CD8-positive, alpha-beta T cell (primary cell): ENCODE measurements at regions of chr6 and their contacts with region 1.

Region 1: GRCh38 chr6:26439657-26440056 is 647 bp upstream of the BTN3A3 start:
- DNase-seq: peak in 2 of 9 experiments; percentile 20 to 48
- ATAC-seq: no peak
- H3K4me3 ChIP-seq: peak overlapping the region; percentile 84 to 91
- H3K4me3 Mint-ChIP-seq: peak overlapping the region; percentile 100
- H3K27ac ChIP-seq: peak overlapping the region; percentile 95 to 98
- H3K27ac Mint-ChIP-seq: peak overlapping the region; percentile 100
- H3K4me1 ChIP-seq: peaks cover 23% of the 10 kb centered on the region
- H3K4me1 Mint-ChIP-seq: peaks cover 44% of the 10 kb centered on the region
- H3K27me3 ChIP-seq: no peaks in the 10 kb centered on the region
- H3K27me3 Mint-ChIP-seq: no peaks in the 10 kb centered on the region
- CTCF ChIP-seq: no peak

Region 2: GRCh38 chr6:26183581-26184366 is 255.9 kb before region 1 on chr6:
- CTCF ChIA-PET with region 1: no interaction called
- POLR2A ChIA-PET with region 1: no interaction called
- intact Hi-C with region 1: no loop called
- DNase-seq: peak in 7 of 9 experiments; percentile 33 to 90 (median 59)
- ATAC-seq: peak; percentile 88
- H3K4me3 ChIP-seq: peak overlapping the region; percentile 60 to 71
- H3K4me3 Mint-ChIP-seq: peak overlapping the region; percentile 100
- H3K27ac ChIP-seq: peak overlapping the region; percentile 61 to 76
- H3K27ac Mint-ChIP-seq: peak overlapping the region; percentile 99
- H3K4me1 ChIP-seq: peaks cover 20% of the 10 kb centered on the region
- H3K4me1 Mint-ChIP-seq: peaks cover 42% of the 10 kb centered on the region
- H3K27me3 ChIP-seq: no peaks in the 10 kb centered on the region
- H3K27me3 Mint-ChIP-seq: no peaks in the 10 kb centered on the region
- CTCF ChIP-seq: no peak

Region 3: DNA sequence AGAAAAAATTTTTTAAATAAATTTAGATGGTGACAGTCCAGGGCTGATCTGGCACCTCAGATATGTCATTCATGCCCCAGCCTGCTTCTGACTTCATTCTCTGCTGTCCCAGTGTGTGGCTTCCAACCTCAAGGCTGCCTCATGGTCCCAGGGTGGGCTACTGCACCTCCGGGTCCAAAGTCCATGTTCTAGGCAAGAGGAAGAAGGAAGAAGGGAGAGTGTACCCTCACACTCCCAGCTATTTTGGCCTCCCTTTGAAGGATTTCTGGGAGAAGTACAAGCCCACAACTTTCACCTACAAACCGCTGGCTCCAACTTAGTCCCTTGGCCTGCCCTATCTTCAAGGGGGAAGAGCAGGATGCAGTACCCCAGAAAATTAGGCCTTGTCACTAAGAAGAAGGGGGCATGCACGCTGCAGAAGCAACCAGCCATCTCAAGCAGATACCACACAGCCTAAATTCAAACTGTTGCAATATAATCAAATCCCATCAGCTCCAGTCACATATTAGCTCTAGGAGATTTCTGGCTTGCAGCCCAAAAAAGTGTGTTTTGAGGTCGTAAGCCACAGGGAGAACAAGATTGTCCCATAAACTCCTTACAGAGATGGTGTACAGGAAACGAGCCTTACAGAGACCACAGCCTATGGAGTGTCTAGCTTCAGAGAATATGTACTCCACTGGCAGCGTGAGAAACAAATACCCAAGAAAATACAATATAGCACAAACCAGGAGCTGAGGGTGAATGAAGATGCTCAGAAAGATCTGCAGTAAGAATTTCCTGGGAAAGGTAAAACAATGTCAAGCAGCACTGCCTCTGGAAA is 75.6 kb before region 1 on chr6:
- CTCF ChIA-PET with region 1: no interaction called
- POLR2A ChIA-PET with region 1: interaction called, 3 read pairs
- intact Hi-C with region 1: loop called in 1 of 2 experiments (anchors 1 kb)
- DNase-seq: peak in 6 of 9 experiments; percentile 9 to 69 (median 34)
- ATAC-seq: no peak
- H3K4me3 ChIP-seq: peak overlapping the region; percentile 90 to 92
- H3K4me3 Mint-ChIP-seq: no peak overlapping the region
- H3K27ac ChIP-seq: peak overlapping the region; percentile 95
- H3K27ac Mint-ChIP-seq: no peak overlapping the region
- H3K4me1 ChIP-seq: peaks cover 51% of the 10 kb centered on the region
- H3K4me1 Mint-ChIP-seq: peaks cover 53% of the 10 kb centered on the region
- H3K27me3 ChIP-seq: no peaks in the 10 kb centered on the region
- H3K27me3 Mint-ChIP-seq: no peaks in the 10 kb centered on the region
- CTCF ChIP-seq: no peak

Region 4: GRCh38 chr6:26421259-26422144 is 18.2 kb before region 1 on chr6:
- CTCF ChIA-PET with region 1: interaction called, 5 read pairs
- POLR2A ChIA-PET with region 1: interaction called, 3 read pairs
- intact Hi-C with region 1: loop called (anchors 1 kb)
- DNase-seq: peak in 8 of 9 experiments; percentile 26 to 85 (median 47)
- ATAC-seq: peak; percentile 95
- H3K4me3 ChIP-seq: peak overlapping the region; percentile 76 to 98
- H3K4me3 Mint-ChIP-seq: no peak overlapping the region
- H3K27ac ChIP-seq: peak overlapping the region; percentile 20 to 81
- H3K27ac Mint-ChIP-seq: no peak overlapping the region
- H3K4me1 ChIP-seq: peaks cover 5% of the 10 kb centered on the region
- H3K4me1 Mint-ChIP-seq: peaks cover 16% of the 10 kb centered on the region
- H3K27me3 ChIP-seq: no peaks in the 10 kb centered on the region
- H3K27me3 Mint-ChIP-seq: no peaks in the 10 kb centered on the region
- CTCF ChIP-seq: no peak

Region 5: DNA sequence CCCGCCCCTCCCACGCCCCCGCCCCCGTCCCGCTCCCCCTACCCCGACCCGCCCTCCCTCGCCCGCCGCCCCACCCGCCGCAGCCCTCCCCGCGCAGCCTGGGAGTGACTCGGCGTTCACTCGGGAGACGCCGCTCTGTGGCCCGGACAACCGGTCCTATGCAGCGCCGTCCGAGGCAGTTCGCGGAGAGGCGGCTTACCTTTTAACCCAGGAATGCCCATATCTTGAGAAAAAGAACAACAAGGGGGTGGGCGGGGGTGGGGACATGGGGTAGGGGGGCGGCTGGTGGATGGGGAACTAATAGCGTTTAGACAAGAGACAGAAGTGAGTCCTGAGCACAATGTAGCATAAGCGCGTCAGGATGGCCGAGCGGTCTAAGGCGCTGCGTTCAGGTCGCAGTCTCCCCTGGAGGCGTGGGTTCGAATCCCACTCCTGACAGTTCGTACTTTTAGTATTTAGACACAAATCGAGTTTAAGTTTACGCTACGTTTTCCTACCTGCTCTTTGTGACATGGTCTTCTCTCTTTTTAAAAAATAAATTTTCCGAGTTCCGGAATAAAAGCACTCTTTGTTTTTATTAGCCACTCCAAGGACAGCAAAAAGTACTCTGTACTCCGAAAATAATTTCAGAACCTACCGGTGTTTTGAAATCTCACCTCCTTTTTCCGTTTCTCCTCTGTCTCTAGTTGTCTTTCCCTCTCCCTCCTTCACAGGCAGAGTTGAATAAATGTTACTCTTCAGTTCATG is 81.4 kb after region 1 on chr6:
- CTCF ChIA-PET with region 1: no interaction called
- POLR2A ChIA-PET with region 1: no interaction called
- intact Hi-C with region 1: loop called in 1 of 2 experiments (anchors 1 kb)
- DNase-seq: peak; percentile 69 to 94 (median 86)
- ATAC-seq: peak; percentile 80
- H3K4me3 ChIP-seq: peak overlapping the region; percentile 50 to 57
- H3K4me3 Mint-ChIP-seq: peak overlapping the region; percentile 83
- H3K27ac ChIP-seq: peak overlapping the region; percentile 35 to 86
- H3K27ac Mint-ChIP-seq: peak overlapping the region; percentile 83
- H3K4me1 ChIP-seq: peaks cover 8% of the 10 kb centered on the region
- H3K4me1 Mint-ChIP-seq: peaks cover 31% of the 10 kb centered on the region
- H3K27me3 ChIP-seq: no peaks in the 10 kb centered on the region
- H3K27me3 Mint-ChIP-seq: no peaks in the 10 kb centered on the region
- CTCF ChIP-seq: no peak

Region 6: DNA sequence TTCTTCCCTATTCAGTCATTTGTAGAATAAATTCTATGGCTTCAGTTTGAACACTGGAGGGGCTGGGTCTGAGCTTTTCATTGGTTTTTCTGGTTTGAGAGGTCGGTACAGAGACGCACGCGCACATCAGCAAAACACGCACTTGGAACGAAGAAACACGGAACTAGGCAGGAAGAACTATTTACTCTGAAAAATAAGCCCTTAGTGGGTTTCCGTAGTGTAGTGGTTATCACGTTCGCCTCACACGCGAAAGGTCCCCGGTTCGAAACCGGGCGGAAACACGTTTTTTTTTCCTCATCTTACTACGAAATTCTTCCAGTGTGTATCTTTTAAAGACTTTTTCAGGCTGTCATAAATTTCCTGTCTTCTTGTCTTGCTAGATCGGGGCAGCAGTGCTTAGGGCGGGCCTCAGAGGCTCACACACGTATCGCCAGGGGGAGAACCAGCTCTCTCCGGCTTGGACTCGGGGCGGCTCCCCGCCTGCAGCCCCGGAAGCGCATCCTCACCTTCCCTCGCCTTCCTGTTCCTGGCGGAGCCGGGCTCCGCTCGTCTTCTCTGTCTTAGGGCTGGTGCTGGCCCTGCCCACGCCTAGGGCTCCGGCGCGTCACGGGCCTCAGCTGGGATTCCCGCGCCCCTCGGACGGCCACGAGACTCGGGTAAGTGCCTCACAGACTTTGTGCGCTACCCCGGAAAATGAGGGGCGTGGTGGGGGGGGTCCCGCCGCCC is 98.4 kb after region 1 on chr6 and contains the start of gene HMGN4:
- CTCF ChIA-PET with region 1: no interaction called
- POLR2A ChIA-PET with region 1: no interaction called
- intact Hi-C with region 1: loop called in 1 of 2 experiments (anchors 1 kb)
- DNase-seq: peak; percentile 65 to 96 (median 79)
- ATAC-seq: peak; percentile 69
- H3K4me3 ChIP-seq: peak within 1 kb of the TSS; percentile 66 to 99
- H3K4me3 Mint-ChIP-seq: peak within 1 kb of the TSS; percentile 89
- H3K27ac ChIP-seq: peak within 1 kb of the TSS; percentile 88 to 93
- H3K27ac Mint-ChIP-seq: peak within 1 kb of the TSS; percentile 92
- H3K4me1 ChIP-seq: peaks cover 32% of the 10 kb centered on the region
- H3K4me1 Mint-ChIP-seq: peaks cover 58% of the 10 kb centered on the region
- H3K27me3 ChIP-seq: no peaks in the 10 kb centered on the region
- H3K27me3 Mint-ChIP-seq: no peaks in the 10 kb centered on the region
- CTCF ChIP-seq: no peak
- total RNA-seq, gene HMGN4: 24.8 to 33.7 TPM

Region 7: DNA sequence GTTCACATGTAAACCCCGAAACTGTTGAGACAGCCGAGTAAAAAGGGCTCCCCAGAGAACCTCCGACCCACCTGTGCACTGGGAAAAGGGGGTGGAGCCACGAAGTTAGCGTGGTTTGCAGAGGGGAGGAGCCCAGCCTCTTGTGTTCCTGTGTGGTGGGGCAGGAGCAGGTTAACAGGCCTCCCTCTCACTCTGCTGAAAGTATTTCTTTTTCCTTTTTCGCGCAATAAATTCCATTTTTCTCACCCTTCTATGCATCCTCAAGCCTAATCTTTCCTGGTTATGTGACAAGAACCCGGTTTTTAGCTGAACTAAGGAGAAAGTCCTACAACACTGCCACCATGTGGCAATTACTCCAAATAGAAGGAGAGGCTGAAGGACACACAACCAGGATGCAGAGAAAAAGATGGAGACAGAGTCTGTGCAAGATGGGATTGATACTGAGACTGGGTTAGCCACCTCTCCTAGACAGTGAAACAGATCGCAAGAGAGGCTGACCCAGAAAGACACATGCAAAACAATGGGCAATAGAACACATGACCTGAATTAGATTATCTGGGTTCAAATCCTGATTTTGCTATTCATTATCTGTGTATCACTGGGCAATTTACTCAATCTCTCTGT is 639.2 kb after region 1 on chr6:
- CTCF ChIA-PET with region 1: no interaction called
- POLR2A ChIA-PET with region 1: no interaction called
- intact Hi-C with region 1: no loop called
- DNase-seq: peak in 7 of 9 experiments; percentile 18 to 69 (median 39)
- ATAC-seq: peak; percentile 71
- H3K4me3 ChIP-seq: peak overlapping the region; percentile 16 to 23
- H3K4me3 Mint-ChIP-seq: peak overlapping the region; percentile 62
- H3K27ac ChIP-seq: no peak overlapping the region
- H3K27ac Mint-ChIP-seq: no peak overlapping the region
- H3K4me1 ChIP-seq: no peaks in the 10 kb centered on the region
- H3K4me1 Mint-ChIP-seq: peaks cover 5% of the 10 kb centered on the region
- H3K27me3 ChIP-seq: peaks cover 0 to 2% of the 10 kb centered on the region in 2 experiments
- H3K27me3 Mint-ChIP-seq: peaks cover 44% of the 10 kb centered on the region
- CTCF ChIP-seq: no peak